Activated CD4-positive, alpha-beta T cell treated with anti-CD3 and anti-CD28 coated beads, Interleukin-2, amount 10 ng/mL, durations not matched to agents 24 days and 14 days (primary cell): ENCODE measurements at regions of chr13 and their contacts with region 1.

Region 1: GRCh38 chr13:44259045-44260027 is 114.3 kb upstream of the SERP2 start:
- DNase-seq: peak; percentile 87
- H3K4me3 Mint-ChIP-seq: peak overlapping the region; percentile 68
- H3K27ac Mint-ChIP-seq: peak overlapping the region; percentile 79
- H3K4me1 Mint-ChIP-seq: peaks cover 17% of the 10 kb centered on the region
- H3K27me3 Mint-ChIP-seq: peaks cover 11% of the 10 kb centered on the region

Region 2: DNA sequence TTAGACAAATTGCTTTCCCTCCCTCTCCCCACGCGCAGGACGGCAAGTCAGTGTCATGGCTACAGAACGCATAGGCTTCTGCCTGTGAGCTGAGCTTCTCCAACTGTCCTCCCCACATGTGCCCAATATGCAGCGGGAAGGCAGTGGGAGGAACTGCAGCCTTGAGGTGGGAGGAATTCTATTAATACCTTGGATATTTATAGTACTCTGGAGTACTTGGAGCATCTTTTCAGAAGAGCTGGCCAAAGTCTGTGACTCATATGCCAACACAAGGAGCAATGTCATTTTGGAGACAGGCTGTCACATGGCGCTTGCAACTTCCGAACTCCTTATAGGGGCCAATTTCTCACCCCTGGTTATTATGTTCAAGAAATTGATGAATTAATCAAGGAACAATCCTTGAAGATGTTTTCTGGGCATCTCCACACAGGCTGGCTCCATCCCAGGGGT is 130.8 kb before region 1 on chr13:
- intact Hi-C with region 1: no loop called
- DNase-seq: no peak
- H3K4me3 Mint-ChIP-seq: no peak overlapping the region
- H3K27ac Mint-ChIP-seq: no peak overlapping the region
- H3K4me1 Mint-ChIP-seq: no peaks in the 10 kb centered on the region
- H3K27me3 Mint-ChIP-seq: peaks cover 12% of the 10 kb centered on the region

Region 3: GRCh38 chr13:44141725-44142539 is 117.4 kb before region 1 on chr13:
- intact Hi-C with region 1: loop called (anchors 5 kb)
- DNase-seq: peak; percentile 99
- H3K4me3 Mint-ChIP-seq: peak overlapping the region; percentile 87
- H3K27ac Mint-ChIP-seq: peak overlapping the region; percentile 83
- H3K4me1 Mint-ChIP-seq: peaks cover 16% of the 10 kb centered on the region
- H3K27me3 Mint-ChIP-seq: peaks cover 30% of the 10 kb centered on the region

Region 4: GRCh38 chr13:44237276-44237767 is 22.0 kb before region 1 on chr13:
- intact Hi-C with region 1: loop called (anchors 2 kb)
- DNase-seq: peak; percentile 59
- H3K4me3 Mint-ChIP-seq: no peak overlapping the region
- H3K27ac Mint-ChIP-seq: peak overlapping the region; percentile 39
- H3K4me1 Mint-ChIP-seq: peaks cover 12% of the 10 kb centered on the region
- H3K27me3 Mint-ChIP-seq: peaks cover 40% of the 10 kb centered on the region

Region 5: GRCh38 chr13:44300895-44301638 is 41.7 kb after region 1 on chr13:
- intact Hi-C with region 1: loop called (anchors 1 kb)
- DNase-seq: peak; percentile 63
- H3K4me3 Mint-ChIP-seq: peak overlapping the region; percentile 23
- H3K27ac Mint-ChIP-seq: peak overlapping the region; percentile 72
- H3K4me1 Mint-ChIP-seq: peaks cover 28% of the 10 kb centered on the region
- H3K27me3 Mint-ChIP-seq: no peaks in the 10 kb centered on the region

Region 6: GRCh38 chr13:44484562-44485138 is 225.3 kb after region 1 on chr13:
- intact Hi-C with region 1: no loop called
- DNase-seq: peak; percentile 60
- H3K4me3 Mint-ChIP-seq: peak overlapping the region; percentile 64
- H3K27ac Mint-ChIP-seq: no peak overlapping the region
- H3K4me1 Mint-ChIP-seq: peaks cover 8% of the 10 kb centered on the region
- H3K27me3 Mint-ChIP-seq: peaks cover 3% of the 10 kb centered on the region

Region 7: DNA sequence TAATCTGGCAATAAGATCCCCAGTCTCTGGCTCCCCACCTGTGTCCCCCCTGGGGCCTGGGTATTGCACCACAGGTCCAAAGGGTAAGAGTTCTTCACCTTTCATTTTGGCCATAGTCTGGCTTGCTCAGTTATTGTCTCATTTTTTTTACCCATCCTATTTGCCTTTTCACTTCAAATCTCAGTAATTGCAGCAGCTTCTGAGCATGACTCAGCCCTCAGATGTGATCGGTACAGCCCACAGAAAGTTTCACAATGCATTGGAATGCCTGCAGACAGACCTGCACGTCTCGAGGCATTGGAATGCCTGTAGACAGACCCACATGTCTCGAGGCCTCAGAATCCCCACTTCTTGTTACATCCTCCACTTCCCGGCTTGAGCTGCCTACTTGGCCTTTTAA is 556.3 kb after region 1 on chr13:
- intact Hi-C with region 1: loop called (anchors 5 kb)
- DNase-seq: peak; percentile 71
- H3K4me3 Mint-ChIP-seq: no peak overlapping the region
- H3K27ac Mint-ChIP-seq: no peak overlapping the region
- H3K4me1 Mint-ChIP-seq: peaks cover 16% of the 10 kb centered on the region
- H3K27me3 Mint-ChIP-seq: peaks cover 29% of the 10 kb centered on the region